Aorta (tissue), 5 donors: ENCODE measurements at regions of chr18 and their contacts with region 1.

Region 1: DNA sequence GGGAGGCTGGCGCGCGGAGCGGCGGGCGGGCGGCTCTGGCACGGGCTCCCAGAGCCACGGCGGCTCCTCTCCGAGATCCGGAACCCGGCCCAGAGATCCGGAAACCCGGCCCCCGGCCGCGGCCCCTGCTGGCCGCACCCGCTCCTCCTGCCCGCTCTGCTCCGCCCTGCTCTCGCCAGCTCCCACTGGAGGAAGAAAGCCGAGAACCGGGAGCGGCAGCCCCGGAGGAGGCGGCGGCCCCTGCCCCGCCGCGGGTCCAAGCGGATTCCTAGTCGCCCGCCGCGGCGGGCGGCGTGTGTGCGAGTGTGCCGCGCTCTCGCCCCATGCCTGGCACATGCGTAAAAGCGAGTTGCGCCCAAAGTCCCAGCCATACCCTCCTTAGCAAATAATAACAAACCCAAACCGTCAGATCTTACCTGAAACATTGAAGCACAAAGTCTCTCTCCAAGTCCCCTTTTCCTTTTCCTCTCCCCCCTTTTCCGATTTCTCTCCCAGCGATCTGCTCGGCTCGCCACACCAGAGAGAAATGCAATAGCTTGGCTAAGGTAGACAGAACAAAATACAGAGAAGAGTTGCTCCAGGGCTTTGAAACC is 108.7 kb upstream of the KCTD1 start:
- DNase-seq: peak; percentile 86 to 93
- ATAC-seq: peak; percentile 90
- H3K4me3 ChIP-seq: peak overlapping the region; percentile 97 to 100
- H3K27ac ChIP-seq: peak overlapping the region; percentile 37 to 61
- H3K4me1 ChIP-seq: no peaks in the 10 kb centered on the region
- H3K27me3 ChIP-seq: no peaks in the 10 kb centered on the region

Region 2: GRCh38 chr18:26090130-26091046 is 566.7 kb before region 1 on chr18 and contains the start of gene SS18:
- intact Hi-C with region 1: loop called in 1 of 2 experiments (anchors 10 kb)
- DNase-seq: peak; percentile 97 to 98
- ATAC-seq: peak; percentile 98
- H3K4me3 ChIP-seq: peak within 1 kb of the TSS; percentile 43 to 87
- H3K27ac ChIP-seq: peak within 1 kb of the TSS; percentile 91 to 95
- H3K4me1 ChIP-seq: no peaks in the 10 kb centered on the region
- H3K27me3 ChIP-seq: no peaks in the 10 kb centered on the region
- total RNA-seq, gene SS18: 70.8 to 81.3 TPM

Region 3: GRCh38 chr18:26226229-26227005 is 430.6 kb before region 1 on chr18 and contains the start of gene TAF4B:
- intact Hi-C with region 1: loop called in 1 of 2 experiments (anchors 10 kb)
- DNase-seq: peak; percentile 96 to 98
- ATAC-seq: peak; percentile 99
- H3K4me3 ChIP-seq: peak within 1 kb of the TSS; percentile 46 to 73
- H3K27ac ChIP-seq: no peak within 1 kb of the TSS
- H3K4me1 ChIP-seq: no peaks in the 10 kb centered on the region
- H3K27me3 ChIP-seq: no peaks in the 10 kb centered on the region
- total RNA-seq, gene TAF4B: 3.9 to 4.2 TPM

Region 4: DNA sequence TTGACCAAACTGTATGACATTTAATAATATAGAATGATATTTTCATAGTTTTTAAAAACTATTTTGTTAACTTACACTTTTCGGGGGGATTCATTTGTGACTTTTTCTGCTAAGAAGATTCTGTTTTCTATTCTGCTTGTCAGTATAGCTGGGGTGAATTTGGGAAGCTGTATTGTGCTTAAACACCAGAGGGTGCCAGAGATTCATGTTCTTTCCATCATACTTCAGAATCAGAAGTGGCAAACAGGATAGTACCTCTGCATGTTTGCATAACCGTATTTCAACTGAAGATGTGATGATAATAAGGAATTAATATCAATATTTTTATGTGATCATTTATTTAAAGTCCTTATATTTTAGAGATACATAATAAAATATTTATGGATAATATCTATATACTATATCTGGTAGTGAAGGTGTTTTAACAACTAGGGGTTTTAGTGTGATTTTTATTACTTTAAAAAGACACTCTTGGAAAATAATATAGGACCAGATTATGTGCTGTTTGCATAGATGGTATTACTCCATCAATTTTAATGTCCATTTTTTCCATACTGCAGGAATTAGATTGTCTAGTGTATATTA is 349.8 kb before region 1 on chr18:
- intact Hi-C with region 1: loop called in 1 of 2 experiments (anchors 10 kb)
- DNase-seq: no peak
- ATAC-seq: no peak
- H3K4me3 ChIP-seq: no peak overlapping the region
- H3K27ac ChIP-seq: no peak overlapping the region
- H3K4me1 ChIP-seq: no peaks in the 10 kb centered on the region
- H3K27me3 ChIP-seq: no peaks in the 10 kb centered on the region

Region 5: DNA sequence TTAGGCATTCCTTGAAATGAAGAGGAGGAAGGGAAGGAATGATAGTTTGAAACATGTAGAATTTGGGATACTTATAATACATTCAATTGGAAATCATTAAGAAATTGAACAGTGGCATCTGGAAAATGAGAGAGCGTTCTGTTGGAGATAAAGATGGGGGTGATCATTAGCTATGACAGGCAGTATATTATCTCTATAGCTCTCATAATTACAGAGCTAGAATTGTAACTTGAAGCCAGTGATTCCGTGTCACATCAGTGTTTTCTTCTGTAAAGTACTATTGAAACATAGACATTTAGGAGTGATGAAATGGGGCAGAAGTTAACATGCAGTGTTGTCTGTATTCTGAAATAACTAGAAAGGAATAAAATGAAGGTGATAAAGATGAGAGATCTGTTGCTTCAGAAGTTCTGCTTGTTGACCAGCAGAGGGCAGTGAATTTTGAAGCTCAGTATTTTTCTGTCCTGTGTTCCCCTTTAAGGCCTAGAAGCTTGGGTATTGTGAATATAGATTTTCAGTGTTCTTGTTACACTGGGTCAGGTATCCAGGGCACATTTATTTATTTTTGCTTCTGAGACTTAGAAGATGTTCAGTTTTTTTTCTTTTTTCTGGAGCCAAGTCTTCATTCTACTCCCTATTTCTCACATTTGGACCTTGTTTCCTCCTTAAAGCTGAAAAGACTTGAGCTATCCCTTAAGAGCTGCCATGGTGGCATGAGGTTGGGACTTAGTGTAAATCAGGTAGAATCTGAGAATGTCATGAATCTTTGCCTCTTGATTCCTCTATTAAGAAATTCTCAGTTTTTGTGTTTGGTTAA is 273.4 kb before region 1 on chr18:
- intact Hi-C with region 1: loop called in 1 of 2 experiments (anchors 5 kb)
- DNase-seq: no peak
- ATAC-seq: peak; percentile 75
- H3K4me3 ChIP-seq: no peak overlapping the region
- H3K27ac ChIP-seq: no peak overlapping the region
- H3K4me1 ChIP-seq: no peaks in the 10 kb centered on the region
- H3K27me3 ChIP-seq: no peaks in the 10 kb centered on the region

Region 6: DNA sequence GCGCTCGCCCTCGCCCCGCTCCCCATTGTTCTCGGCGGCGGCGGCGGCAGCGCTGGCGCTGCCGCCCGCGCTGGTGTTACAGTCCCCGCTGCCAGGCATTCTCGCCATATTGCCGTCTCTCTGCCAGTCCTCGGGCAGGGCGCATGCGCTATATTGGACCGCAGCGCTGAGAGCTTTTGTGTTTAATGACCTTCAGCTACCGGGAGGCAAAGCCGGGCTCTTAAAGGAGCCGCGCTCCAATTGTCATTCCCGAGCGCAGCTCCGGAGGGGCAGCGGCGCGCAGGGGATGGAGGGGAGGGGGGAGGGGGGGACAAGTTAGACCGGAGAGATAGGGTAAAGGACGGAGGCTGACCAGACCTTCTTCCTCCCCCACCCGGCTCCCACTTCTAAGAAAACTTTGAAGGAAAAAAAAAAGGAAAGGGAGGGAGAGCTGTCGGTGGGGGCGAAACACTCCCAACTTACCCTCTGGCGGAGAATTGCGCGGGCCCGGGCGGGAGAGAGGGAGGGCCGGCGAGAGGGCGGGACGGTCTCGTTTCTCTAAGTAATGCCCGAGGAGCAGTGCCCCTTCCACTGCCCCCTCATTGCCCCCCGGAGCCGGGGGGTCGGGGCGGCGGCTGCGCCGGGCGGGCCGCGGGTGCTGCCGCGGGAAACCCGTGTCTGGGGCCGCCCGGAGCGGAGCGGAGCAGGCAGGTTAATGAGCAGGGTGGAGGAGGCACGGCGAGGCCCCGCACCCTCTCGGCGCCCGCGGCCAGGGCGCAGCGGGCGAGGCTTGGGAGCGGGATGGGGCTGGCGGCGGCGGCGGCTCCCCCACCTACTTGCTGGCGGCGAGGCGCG is 108.4 kb before region 1 on chr18 and contains the start of gene KCTD1:
- intact Hi-C with region 1: loop called in 1 of 2 experiments (anchors 5 kb)
- DNase-seq: peak; percentile 89 to 90
- ATAC-seq: peak; percentile 61
- H3K4me3 ChIP-seq: peak within 1 kb of the TSS; percentile 73 to 91
- H3K27ac ChIP-seq: peak within 1 kb of the TSS in 1 of 2 donors; percentile 6
- H3K4me1 ChIP-seq: no peaks in the 10 kb centered on the region
- H3K27me3 ChIP-seq: no peaks in the 10 kb centered on the region
- total RNA-seq, gene KCTD1: 10.7 to 13.2 TPM

Region 7: DNA sequence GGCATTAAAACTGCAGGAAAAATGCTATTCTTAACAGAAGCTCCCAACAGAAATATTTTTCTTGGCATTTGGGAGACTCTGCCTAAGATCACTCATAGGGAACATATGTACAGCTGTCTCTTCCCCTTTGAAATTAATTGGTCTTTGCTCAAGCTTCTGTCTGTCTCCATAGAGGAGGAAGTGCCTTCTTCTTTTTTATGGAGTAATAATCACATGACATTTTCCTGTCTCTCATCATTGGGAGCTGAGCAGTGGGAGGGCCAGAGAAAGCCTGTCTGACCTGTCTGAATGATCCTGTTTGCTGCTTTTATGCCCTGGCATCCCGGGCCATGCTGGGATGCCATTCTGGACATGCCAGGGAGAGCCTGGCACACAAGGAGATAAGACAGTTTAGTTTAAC is 62.9 kb after region 1 on chr18:
- intact Hi-C with region 1: no loop called
- DNase-seq: no peak
- ATAC-seq: no peak
- H3K4me3 ChIP-seq: no peak overlapping the region
- H3K27ac ChIP-seq: no peak overlapping the region
- H3K4me1 ChIP-seq: no peaks in the 10 kb centered on the region
- H3K27me3 ChIP-seq: no peaks in the 10 kb centered on the region